ENCODE measurements at regions of chr1 and their contacts with region 1.

Region 1: DNA sequence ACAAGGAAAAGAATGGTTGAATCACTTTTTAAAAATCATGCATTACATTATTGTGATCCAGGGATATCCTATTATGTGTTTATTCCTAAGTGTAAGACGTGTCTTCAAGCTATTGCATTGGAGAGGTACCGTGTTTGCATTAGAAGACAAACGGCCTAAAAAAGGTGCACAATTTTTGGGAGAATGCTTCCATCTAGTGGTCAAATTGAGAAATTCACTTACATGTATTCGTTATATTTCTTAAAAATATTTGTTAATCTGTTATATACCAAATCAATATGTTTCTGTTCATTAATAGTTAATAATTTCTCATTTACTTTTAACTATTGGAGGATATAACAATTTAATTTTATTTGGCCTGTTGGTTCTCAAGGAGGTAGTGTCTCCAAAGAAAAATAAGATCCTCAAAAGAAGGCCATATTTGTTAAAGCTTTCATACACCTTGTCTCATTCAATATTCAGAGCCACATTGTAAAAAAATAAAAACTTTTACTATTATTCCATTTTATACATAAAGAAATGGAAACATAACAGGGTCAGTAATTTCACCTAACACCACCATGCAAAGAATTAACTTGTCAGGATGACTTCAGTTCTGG is 40.5 kb upstream of the KCTD3 start:
- DNase-seq: no peak
- H3K4me3 ChIP-seq: no peak overlapping the region
- H3K27ac ChIP-seq: no peak overlapping the region
- H3K4me1 ChIP-seq: no peaks in the 10 kb centered on the region
- H3K27me3 ChIP-seq: no peaks in the 10 kb centered on the region
- CTCF ChIP-seq: peak in 2 of 3 experiments; percentile 36 to 52; a peak in 2 of 4 replicates
- EP300 ChIP-seq: no peak
- POLR2A ChIP-seq: no peak
- RAD21 ChIP-seq: peak; percentile 79 to 87

Region 2: DNA sequence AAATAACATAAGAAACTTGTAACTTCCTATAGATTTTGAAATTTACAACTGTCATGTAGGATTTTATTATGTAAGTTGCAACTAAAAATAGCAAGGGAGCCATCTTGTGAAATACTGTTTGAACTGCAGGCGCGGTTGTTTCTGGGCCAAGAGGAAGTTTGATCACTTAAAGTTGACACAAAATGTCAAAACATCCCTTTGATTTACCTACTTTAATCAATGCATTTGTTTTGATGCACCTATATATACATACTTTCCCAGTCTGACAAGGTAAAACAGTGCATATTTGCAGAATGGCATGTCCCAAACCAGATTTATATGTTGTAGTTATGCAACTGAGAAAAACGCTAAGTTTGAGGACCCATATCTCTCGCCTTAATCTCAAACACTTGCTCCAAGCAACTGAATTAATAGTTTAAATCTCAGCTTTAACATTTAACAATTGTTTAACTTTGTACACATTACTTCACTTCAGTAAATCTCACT is 380.3 kb before region 1 on chr1:
- CTCF ChIA-PET with region 1: interaction called, 16 read pairs
- POLR2A ChIA-PET with region 1: no interaction called
- DNase-seq: no peak
- H3K4me3 ChIP-seq: no peak overlapping the region
- H3K27ac ChIP-seq: no peak overlapping the region
- H3K4me1 ChIP-seq: no peaks in the 10 kb centered on the region
- H3K27me3 ChIP-seq: no peaks in the 10 kb centered on the region
- CTCF ChIP-seq: peak in 2 of 3 experiments; percentile 48 to 51; a peak in 2 of 4 replicates
- EP300 ChIP-seq: no peak
- POLR2A ChIP-seq: no peak
- RAD21 ChIP-seq: peak; percentile 67 to 74

Region 3: DNA sequence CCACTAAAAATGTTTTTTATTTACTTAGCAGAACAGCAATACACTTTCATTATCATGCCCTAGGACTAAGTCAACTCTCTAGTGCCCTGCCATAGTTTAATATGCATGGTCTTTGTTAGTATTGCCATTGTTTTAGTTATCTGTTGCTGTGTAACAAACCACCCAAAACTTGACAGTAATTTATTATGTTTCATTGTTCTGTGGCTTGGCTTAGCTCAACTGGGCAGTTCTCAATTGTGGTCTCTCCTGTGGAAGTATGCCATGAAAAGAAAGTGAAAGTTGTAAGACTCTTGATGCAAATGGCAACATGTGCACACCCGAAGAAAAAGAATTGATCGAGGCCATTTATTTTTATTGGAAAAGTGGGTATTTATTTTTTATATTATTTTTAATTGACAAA is 165.9 kb before region 1 on chr1:
- CTCF ChIA-PET with region 1: no interaction called
- POLR2A ChIA-PET with region 1: no interaction called
- DNase-seq: no peak
- H3K4me3 ChIP-seq: no peak overlapping the region
- H3K27ac ChIP-seq: no peak overlapping the region
- H3K4me1 ChIP-seq: no peaks in the 10 kb centered on the region
- H3K27me3 ChIP-seq: no peaks in the 10 kb centered on the region
- CTCF ChIP-seq: no peak
- EP300 ChIP-seq: no peak
- POLR2A ChIP-seq: no peak
- RAD21 ChIP-seq: no peak

Region 4: GRCh38 chr1:215507119-215507518 is 19.5 kb before region 1 on chr1:
- CTCF ChIA-PET with region 1: no interaction called
- POLR2A ChIA-PET with region 1: no interaction called
- DNase-seq: no peak
- H3K4me3 ChIP-seq: no peak overlapping the region
- H3K27ac ChIP-seq: no peak overlapping the region
- H3K4me1 ChIP-seq: no peaks in the 10 kb centered on the region
- H3K27me3 ChIP-seq: no peaks in the 10 kb centered on the region
- CTCF ChIP-seq: no peak
- EP300 ChIP-seq: no peak
- POLR2A ChIP-seq: no peak
- RAD21 ChIP-seq: no peak

Region 5: GRCh38 chr1:215539803-215540592 is 13.3 kb after region 1 on chr1:
- CTCF ChIA-PET with region 1: interaction called, 12 read pairs
- POLR2A ChIA-PET with region 1: no interaction called
- DNase-seq: no peak
- H3K4me3 ChIP-seq: no peak overlapping the region
- H3K27ac ChIP-seq: no peak overlapping the region
- H3K4me1 ChIP-seq: no peaks in the 10 kb centered on the region
- H3K27me3 ChIP-seq: no peaks in the 10 kb centered on the region
- CTCF ChIP-seq: no peak
- EP300 ChIP-seq: no peak
- POLR2A ChIP-seq: no peak
- RAD21 ChIP-seq: no peak